Activated CD8-positive, alpha-beta memory T cell treated with anti-CD3 and anti-CD28 coated beads, Interleukin-2, amount 10 ng/mL, durations not matched to agents 7 days and 5 days (primary cell): ENCODE measurements at regions of chr16 and their contacts with region 1.

Region 1: GRCh38 chr16:11051879-11052808 is 107.8 kb downstream of the CLEC16A start:
- DNase-seq: peak; percentile 97
- ATAC-seq: peak; percentile 79
- H3K4me3 Mint-ChIP-seq: peak overlapping the region; percentile 58
- H3K27ac Mint-ChIP-seq: peak overlapping the region; percentile 92
- H3K4me1 Mint-ChIP-seq: peaks cover 97% of the 10 kb centered on the region
- H3K27me3 Mint-ChIP-seq: no peaks in the 10 kb centered on the region

Region 2: DNA sequence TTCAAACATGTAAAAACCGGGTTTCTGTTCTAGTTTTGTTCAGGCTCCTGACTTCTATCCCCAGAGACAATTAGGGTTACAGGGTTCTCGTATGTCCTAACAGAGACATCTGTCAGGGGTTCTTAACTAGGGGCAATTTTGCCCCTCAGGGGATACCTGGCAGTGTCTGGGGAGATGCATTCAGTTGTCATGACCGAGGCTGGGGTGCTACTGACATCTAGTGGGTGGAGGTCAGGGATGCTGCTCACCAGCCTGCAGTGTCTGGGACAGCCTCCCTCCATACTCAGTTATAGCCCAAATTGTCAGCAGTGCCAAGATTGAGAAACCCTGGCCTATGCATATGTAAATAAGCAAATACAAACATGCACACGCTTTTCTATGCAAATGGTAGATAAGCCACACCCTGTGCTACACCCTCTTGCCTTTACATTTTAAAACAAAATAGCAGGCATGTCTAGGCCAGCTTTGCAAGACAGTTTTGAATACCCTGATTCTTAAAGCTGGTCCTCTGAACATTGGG is 70.4 kb before region 1 on chr16:
- CTCF ChIA-PET with region 1: interaction called, 12 read pairs
- DNase-seq: peak; percentile 87
- ATAC-seq: peak; percentile 89
- H3K4me3 Mint-ChIP-seq: peak overlapping the region; percentile 58
- H3K27ac Mint-ChIP-seq: peak overlapping the region; percentile 81
- H3K4me1 Mint-ChIP-seq: peaks cover 85% of the 10 kb centered on the region
- H3K27me3 Mint-ChIP-seq: no peaks in the 10 kb centered on the region

Region 3: DNA sequence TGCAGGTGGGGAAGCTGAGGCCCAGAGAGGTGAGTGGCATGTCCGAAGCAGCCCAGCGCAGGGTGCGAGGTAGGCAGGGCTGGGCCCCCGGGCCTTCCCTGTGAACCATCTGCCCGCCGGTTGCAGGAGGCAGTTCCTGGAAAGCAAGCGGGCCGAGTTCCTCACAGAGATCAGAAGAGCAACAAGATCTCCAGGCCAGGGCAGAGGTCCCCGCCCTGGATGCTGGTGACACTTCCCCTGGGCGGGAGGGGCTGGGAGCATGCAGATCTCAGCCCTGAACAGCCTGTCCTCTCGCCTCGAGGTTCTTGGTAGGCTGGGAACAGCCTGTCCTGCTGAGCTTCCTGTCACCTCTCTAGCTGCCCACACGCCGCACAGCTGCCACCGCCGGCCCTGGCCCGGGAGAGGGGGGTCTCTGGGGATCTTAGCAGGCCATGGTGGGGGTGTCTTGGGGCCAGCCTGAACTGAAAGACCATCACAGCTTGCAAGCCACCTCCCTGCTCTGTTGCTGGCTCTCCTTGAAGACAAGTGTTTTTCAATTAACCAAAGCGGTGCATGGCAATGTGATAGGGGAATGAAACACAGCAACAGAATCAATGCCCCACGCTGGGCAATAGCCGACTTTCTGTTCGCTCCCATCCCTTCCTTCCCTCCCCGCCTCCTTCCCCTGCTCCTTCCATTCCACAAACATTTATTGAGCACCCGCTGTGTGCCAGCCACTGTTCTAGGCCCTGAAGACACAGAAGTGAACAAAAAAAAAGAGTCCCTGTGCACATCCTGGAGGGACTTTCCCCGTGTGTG is 172.2 kb after region 1 on chr16:
- CTCF ChIA-PET with region 1: interaction called, 10 read pairs
- DNase-seq: peak; percentile 93
- ATAC-seq: peak; percentile 76
- H3K4me3 Mint-ChIP-seq: peak overlapping the region; percentile 65
- H3K27ac Mint-ChIP-seq: peak overlapping the region; percentile 99
- H3K4me1 Mint-ChIP-seq: peaks cover 71% of the 10 kb centered on the region
- H3K27me3 Mint-ChIP-seq: no peaks in the 10 kb centered on the region